T-cell (primary cell): ENCODE measurements at regions of chr16 and their contacts with region 1.

Region 1: GRCh38 chr16:47037746-47038458 is 64.4 kb upstream of the DNAJA2 start:
- DNase-seq: peak; percentile 63 to 92 (median 84)
- ATAC-seq: peak; percentile 97
- H3K4me3 ChIP-seq: peak overlapping the region; percentile 59 to 71
- H3K4me3 Mint-ChIP-seq: peak overlapping the region; percentile 70 to 75 (median 73)
- H3K27ac ChIP-seq: no peak overlapping the region
- H3K27ac Mint-ChIP-seq: no peak overlapping the region
- H3K4me1 ChIP-seq: peaks cover 0 to 13% of the 10 kb centered on the region in 2 experiments
- H3K4me1 Mint-ChIP-seq: peaks cover 0 to 5% (median 4%) of the 10 kb centered on the region in 3 donors
- H3K27me3 ChIP-seq: peaks cover 2 to 26% of the 10 kb centered on the region in 2 experiments
- H3K27me3 Mint-ChIP-seq: peaks cover 2 to 4% of the 10 kb centered on the region in 2 donors

Region 2: GRCh38 chr16:47052666-47053640 is 15.1 kb after region 1 on chr16:
- CTCF ChIA-PET with region 1: interaction called in 1 of 2 experiments, 12 read pairs
- POLR2A ChIA-PET with region 1: interaction called in 1 of 2 experiments, 3 read pairs
- DNase-seq: no peak
- ATAC-seq: no peak
- H3K4me3 ChIP-seq: no peak overlapping the region
- H3K4me3 Mint-ChIP-seq: no peak overlapping the region
- H3K27ac ChIP-seq: no peak overlapping the region
- H3K27ac Mint-ChIP-seq: no peak overlapping the region
- H3K4me1 ChIP-seq: no peaks in the 10 kb centered on the region
- H3K4me1 Mint-ChIP-seq: no peaks in the 10 kb centered on the region
- H3K27me3 ChIP-seq: peaks cover 0 to 32% of the 10 kb centered on the region in 2 experiments
- H3K27me3 Mint-ChIP-seq: peaks cover 0 to 2% of the 10 kb centered on the region in 2 donors

Region 3: GRCh38 chr16:47110939-47111338 is 73.0 kb after region 1 on chr16:
- CTCF ChIA-PET with region 1: interaction called in 1 of 2 experiments, 17 read pairs
- POLR2A ChIA-PET with region 1: no interaction called
- DNase-seq: no peak
- ATAC-seq: no peak
- H3K4me3 ChIP-seq: no peak overlapping the region
- H3K4me3 Mint-ChIP-seq: no peak overlapping the region
- H3K27ac ChIP-seq: no peak overlapping the region
- H3K27ac Mint-ChIP-seq: no peak overlapping the region
- H3K4me1 ChIP-seq: no peaks in the 10 kb centered on the region
- H3K4me1 Mint-ChIP-seq: peaks cover 0 to 9% (median 6%) of the 10 kb centered on the region in 3 donors
- H3K27me3 ChIP-seq: no peaks in the 10 kb centered on the region
- H3K27me3 Mint-ChIP-seq: no peaks in the 10 kb centered on the region

Region 4: GRCh38 chr16:48164907-48165726 is 1127.2 kb after region 1 on chr16:
- CTCF ChIA-PET with region 1: interaction called, 6 to 11 read pairs
- POLR2A ChIA-PET with region 1: no interaction called
- DNase-seq: peak in 34 of 35 experiments; percentile 16 to 75 (median 46)
- ATAC-seq: peak; percentile 65 to 75 (median 69)
- H3K4me3 ChIP-seq: no peak overlapping the region
- H3K4me3 Mint-ChIP-seq: no peak overlapping the region
- H3K27ac ChIP-seq: no peak overlapping the region
- H3K27ac Mint-ChIP-seq: no peak overlapping the region
- H3K4me1 ChIP-seq: peaks cover 0 to 5% of the 10 kb centered on the region in 2 experiments
- H3K4me1 Mint-ChIP-seq: peaks cover 0 to 4% (median 4%) of the 10 kb centered on the region in 3 donors
- H3K27me3 ChIP-seq: peaks cover 0 to 3% of the 10 kb centered on the region in 2 experiments
- H3K27me3 Mint-ChIP-seq: peaks cover 6 to 8% of the 10 kb centered on the region in 2 donors